Mammary epithelial cell (primary cell): ENCODE measurements at regions of chr6 and their contacts with region 1.

Region 1: GRCh38 chr6:100988391-100988984 is 107.4 kb upstream of the ASCC3 start:
- DNase-seq: no peak
- H3K4me3 ChIP-seq: no peak overlapping the region
- H3K27ac ChIP-seq: no peak overlapping the region
- H3K4me1 ChIP-seq: no peaks in the 10 kb centered on the region
- H3K27me3 ChIP-seq: peaks cover 2% of the 10 kb centered on the region
- CTCF ChIP-seq: no peak

Region 2: GRCh38 chr6:101015541-101015940 is 27.1 kb after region 1 on chr6:
- CTCF ChIA-PET with region 1: interaction called, 15 read pairs
- dilution Hi-C with region 1: no loop called
- in situ Hi-C with region 1: no loop called
- intact Hi-C with region 1: no loop called
- DNase-seq: no peak
- H3K4me3 ChIP-seq: no peak overlapping the region
- H3K27ac ChIP-seq: no peak overlapping the region
- H3K4me1 ChIP-seq: no peaks in the 10 kb centered on the region
- H3K27me3 ChIP-seq: no peaks in the 10 kb centered on the region
- CTCF ChIP-seq: no peak